AG04450 (cell line): ENCODE measurements at regions of chr5 and their contacts with region 1.

Region 1: DNA sequence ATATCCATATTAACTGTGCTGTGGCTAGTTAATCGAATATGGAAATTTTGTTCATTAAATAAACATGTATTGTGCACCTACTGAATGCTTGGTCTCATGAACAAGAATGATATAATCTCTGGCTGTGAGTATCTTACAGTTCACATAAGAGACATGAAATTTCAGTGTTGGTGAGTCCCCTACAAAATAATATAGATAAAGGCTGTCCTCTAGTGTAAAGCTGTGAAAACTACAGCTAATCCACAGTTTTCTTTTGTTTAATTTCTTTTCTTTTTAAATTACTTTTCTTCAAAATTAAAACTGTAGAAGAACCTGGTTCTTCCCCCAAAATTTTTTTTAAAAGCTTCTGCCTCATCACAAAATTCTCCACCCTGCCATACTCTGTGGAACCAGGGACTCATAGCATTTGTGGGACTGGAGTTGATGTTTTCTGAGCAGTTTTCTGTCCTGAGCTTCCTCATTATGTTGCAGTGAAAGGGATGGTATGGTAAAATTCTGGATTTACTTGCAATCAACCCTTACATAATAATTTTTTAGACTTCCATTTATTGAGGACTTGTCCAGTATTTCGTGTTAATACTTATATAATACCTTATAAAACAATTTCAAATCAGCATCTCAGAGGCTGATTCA is 135.0 kb downstream of the STK32A start:
- DNase-seq: no peak
- H3K4me3 ChIP-seq: no peak overlapping the region
- H3K27ac ChIP-seq: no peak overlapping the region
- H3K27me3 ChIP-seq: peaks cover 2% of the 10 kb centered on the region
- CTCF ChIP-seq: peak; percentile 61

Region 2: GRCh38 chr5:147098233-147098790 is 271.5 kb before region 1 on chr5:
- CTCF ChIA-PET with region 1: interaction called, 15 read pairs
- POLR2A ChIA-PET with region 1: no interaction called
- DNase-seq: no peak
- H3K4me3 ChIP-seq: no peak overlapping the region
- H3K27ac ChIP-seq: no peak overlapping the region
- H3K27me3 ChIP-seq: no peaks in the 10 kb centered on the region
- CTCF ChIP-seq: peak; percentile 57

Region 3: GRCh38 chr5:147223948-147224791 is 145.7 kb before region 1 on chr5:
- CTCF ChIA-PET with region 1: interaction called, 57 read pairs
- POLR2A ChIA-PET with region 1: no interaction called
- DNase-seq: no peak
- H3K4me3 ChIP-seq: no peak overlapping the region
- H3K27ac ChIP-seq: no peak overlapping the region
- H3K27me3 ChIP-seq: peaks cover 2% of the 10 kb centered on the region
- CTCF ChIP-seq: peak; percentile 72

Region 4: GRCh38 chr5:147382776-147383175 is 12.9 kb after region 1 on chr5:
- CTCF ChIA-PET with region 1: interaction called, 25 read pairs
- POLR2A ChIA-PET with region 1: no interaction called
- DNase-seq: no peak
- H3K4me3 ChIP-seq: peak overlapping the region; percentile 33
- H3K27ac ChIP-seq: no peak overlapping the region
- H3K27me3 ChIP-seq: no peaks in the 10 kb centered on the region
- CTCF ChIP-seq: no peak